ENCODE measurements at regions of chr2 and their contacts with region 1.

Region 1: GRCh38 chr2:232697100-232697865 is at the start of gene GIGYF2:
- DNase-seq: peak; percentile 97
- H3K4me3 Mint-ChIP-seq: peak within 1 kb of the TSS; percentile 87
- H3K27ac Mint-ChIP-seq: peak within 1 kb of the TSS; percentile 70
- H3K4me1 Mint-ChIP-seq: peaks cover 36% of the 10 kb centered on the region
- H3K27me3 Mint-ChIP-seq: no peaks in the 10 kb centered on the region
- total RNA-seq, gene GIGYF2: 49.7 to 52.8 TPM

Region 2: DNA sequence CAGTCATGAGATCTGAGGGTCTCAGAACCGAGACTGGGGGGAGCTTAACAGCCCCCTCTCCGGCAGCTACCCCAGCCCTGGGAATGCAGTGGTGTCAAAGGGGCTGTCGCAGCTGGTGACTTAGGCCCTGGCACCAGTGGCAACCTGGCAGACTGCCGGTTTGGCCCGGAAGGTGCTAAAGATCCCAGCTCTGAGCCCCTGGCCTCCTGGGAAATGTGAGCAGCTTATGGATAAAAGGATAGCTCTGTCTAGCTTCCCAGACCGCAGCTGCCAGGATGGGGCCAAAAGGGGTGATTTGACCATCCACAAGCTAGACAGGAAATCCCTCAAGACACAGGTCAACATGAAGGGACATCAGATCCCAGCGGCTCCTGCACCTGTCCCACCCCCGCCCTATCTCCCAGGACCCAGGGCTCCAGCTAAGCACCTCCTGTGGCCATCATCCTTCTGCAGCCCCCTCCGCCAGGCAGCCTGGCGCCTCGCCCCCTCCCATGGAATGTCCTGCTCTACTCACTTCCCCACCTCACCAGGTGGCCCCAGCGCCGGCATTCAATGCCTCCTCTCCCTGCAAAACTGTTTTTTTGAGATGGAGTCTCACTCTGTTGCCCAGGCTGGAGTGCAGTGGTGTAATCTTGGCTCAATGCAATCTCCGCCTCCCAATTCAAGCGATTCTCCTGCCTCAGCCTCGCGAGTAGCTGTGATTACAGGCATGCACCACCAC is 97.1 kb before region 1 on chr2:
- CTCF ChIA-PET with region 1: interaction called, 7 read pairs
- intact Hi-C with region 1: loop called (anchors 10 kb)
- DNase-seq: no peak
- H3K4me3 Mint-ChIP-seq: no peak overlapping the region
- H3K27ac Mint-ChIP-seq: no peak overlapping the region
- H3K4me1 Mint-ChIP-seq: no peaks in the 10 kb centered on the region
- H3K27me3 Mint-ChIP-seq: no peaks in the 10 kb centered on the region

Region 3: DNA sequence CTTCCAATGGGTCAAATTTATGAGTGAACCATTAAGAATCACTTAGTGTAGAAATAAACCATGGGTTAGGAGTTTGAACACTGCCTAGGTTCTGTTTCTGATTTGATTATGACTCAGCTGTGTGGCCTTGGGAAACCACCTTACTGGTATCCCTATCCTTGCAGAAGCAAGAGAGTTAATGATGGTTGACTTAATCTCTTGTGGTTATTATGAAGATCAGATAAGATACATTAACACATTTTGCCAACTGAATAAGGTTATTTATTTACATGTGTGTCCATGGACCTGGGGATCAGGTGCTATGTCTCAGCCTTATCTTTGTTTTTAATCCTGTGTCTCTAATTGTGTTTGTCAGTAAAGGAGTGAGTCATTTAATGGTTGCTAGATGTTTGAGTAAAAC is 84.5 kb after region 1 on chr2:
- CTCF ChIA-PET with region 1: no interaction called
- intact Hi-C with region 1: loop called (anchors 1 kb)
- DNase-seq: peak; percentile 57
- H3K4me3 Mint-ChIP-seq: no peak overlapping the region
- H3K27ac Mint-ChIP-seq: no peak overlapping the region
- H3K4me1 Mint-ChIP-seq: peaks cover 8% of the 10 kb centered on the region
- H3K27me3 Mint-ChIP-seq: no peaks in the 10 kb centered on the region

Region 4: GRCh38 chr2:233075966-233076339 is 378.7 kb after region 1 on chr2:
- CTCF ChIA-PET with region 1: no interaction called
- intact Hi-C with region 1: no loop called
- DNase-seq: peak; percentile 49
- H3K4me3 Mint-ChIP-seq: no peak overlapping the region
- H3K27ac Mint-ChIP-seq: no peak overlapping the region
- H3K4me1 Mint-ChIP-seq: peaks cover 35% of the 10 kb centered on the region
- H3K27me3 Mint-ChIP-seq: no peaks in the 10 kb centered on the region